Tibial artery (tissue), 4 donors: ENCODE measurements at regions of chr17 and their contacts with region 1.

Region 1: GRCh38 chr17:3913531-3914311 is 2.5 kb downstream of the P2RX1 start:
- DNase-seq: peak; percentile 74 to 90
- H3K4me3 ChIP-seq: peak overlapping the region; percentile 53 to 63
- H3K27ac ChIP-seq: peak overlapping the region; percentile 84 to 91
- H3K4me1 ChIP-seq: peaks cover 7 to 76% (median 24%) of the 10 kb centered on the region in 4 donors
- H3K27me3 ChIP-seq: no peaks in the 10 kb centered on the region
- CTCF ChIP-seq: peak; percentile 97 to 98

Region 2: DNA sequence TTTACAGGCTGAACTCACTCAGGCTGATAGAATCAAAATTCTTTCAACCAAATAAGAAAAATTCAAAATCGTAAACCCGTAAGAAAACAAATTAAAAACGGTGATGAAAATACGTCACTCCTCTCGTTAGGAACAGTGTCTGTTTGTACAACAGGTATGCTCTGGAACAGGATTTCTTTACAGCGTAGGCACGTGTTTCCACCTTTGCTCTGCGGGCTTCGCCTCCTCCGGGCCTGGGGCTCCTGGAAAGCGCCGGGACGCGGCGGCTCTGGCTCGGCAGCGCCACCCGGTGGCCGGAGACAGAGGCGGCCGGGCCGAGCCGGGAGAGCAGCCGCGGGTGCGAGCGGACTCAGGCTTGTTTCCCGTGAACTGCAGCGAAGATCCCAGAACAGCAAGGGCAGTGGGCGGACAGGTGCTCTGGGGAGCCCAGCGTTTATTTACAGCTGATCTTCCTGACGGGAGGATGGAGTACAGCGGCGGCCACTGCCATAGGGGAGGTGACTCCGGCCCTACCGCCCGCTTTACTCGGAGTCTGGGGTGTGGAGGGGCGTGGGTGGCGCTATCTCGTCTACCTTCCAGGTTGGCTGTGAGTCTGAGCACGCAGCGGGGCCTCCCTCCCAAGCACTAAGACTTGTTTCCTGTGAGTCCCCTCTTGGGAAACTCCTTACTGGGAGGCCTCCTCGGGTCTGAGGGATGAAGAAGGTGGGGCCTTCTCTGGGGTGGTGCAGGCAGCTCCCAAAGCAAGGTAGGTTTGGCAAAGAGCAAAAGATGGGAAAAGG is 91.0 kb after region 1 on chr17:
- intact Hi-C with region 1: loop called (anchors 5 kb)
- DNase-seq: no peak
- H3K4me3 ChIP-seq: no peak overlapping the region
- H3K27ac ChIP-seq: no peak overlapping the region
- H3K4me1 ChIP-seq: peaks cover 0 to 16% (median 6%) of the 10 kb centered on the region in 4 donors
- H3K27me3 ChIP-seq: peaks cover 0 to 10% of the 10 kb centered on the region in 2 donors
- CTCF ChIP-seq: peak; percentile 85 to 89

Region 3: DNA sequence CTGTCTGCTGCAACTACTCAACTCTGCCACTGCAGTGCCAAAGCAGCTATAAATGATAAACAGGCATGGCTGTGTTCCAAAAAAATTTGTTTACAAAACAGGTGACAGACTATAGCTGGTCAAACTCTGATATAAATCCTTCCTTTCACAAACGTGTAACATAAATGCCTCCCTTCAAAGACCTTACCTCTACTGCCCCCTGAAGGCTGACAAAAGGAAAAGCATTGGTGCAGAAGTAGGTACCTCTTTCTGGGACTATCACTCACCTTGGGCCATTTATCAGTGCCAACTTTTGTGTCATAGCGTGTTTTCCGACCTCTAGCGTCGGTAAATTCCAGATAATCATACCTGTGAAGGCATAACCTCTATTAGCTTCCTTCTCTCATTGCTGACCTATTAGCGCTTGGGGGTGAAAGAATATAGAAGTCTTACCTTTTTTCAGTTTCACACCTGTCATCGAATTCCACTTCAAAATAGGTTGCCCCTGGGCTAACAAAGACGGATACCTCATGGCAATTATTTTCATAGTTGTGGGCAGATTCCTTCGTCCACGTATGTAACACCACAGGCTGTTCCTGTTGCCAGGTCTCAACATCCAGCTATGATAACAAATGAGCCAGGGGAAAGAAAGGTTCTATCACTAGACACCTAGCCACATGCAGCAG is 161.2 kb after region 1 on chr17:
- intact Hi-C with region 1: loop called (anchors 5 kb)
- DNase-seq: no peak
- H3K4me3 ChIP-seq: no peak overlapping the region
- H3K27ac ChIP-seq: no peak overlapping the region
- H3K4me1 ChIP-seq: peaks cover 0 to 12% (median 3%) of the 10 kb centered on the region in 4 donors
- H3K27me3 ChIP-seq: no peaks in the 10 kb centered on the region
- CTCF ChIP-seq: peak; percentile 45 to 53